ENCODE measurements at regions of chr3 and their contacts with region 1.

Region 1: DNA sequence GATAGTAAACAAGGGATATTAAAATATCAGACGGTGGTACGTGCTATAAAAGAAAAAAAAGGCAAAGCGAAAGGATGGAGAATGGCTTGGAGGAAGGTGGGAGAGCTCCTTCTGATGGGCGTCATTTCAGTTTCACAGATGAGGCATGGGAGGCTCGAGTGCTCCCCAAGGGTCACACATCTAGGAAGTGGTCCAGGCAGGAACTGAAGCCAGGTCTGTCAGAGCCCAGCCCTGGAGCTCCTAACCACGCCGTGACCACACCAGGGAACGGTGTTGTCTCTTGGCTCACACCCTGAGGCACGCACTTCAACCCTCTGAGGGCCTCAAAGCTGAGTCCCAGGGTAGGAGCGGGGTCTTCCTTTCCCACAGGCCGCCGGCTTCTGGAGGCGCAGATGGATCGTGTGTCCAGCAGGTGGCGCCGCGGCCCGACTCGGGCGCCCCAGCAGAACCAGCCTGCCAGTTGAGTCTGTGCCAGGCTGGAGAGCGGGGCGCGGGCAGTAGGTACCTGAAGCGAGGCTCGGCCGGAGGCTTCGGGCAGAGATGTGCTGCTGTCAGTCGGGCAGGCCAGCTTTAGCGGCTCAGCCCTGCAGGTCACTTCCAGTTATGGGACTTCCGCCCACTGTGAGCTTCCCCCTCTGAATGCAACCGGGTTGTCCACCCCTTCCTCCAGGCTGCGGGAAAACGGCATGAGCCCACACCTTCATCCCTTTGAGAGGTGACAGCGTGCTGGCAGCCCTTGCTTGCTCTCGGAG is 68.1 kb downstream of the SLC6A1 start:
- DNase-seq: peak; percentile 77
- ATAC-seq: peak; percentile 76
- H3K4me3 Mint-ChIP-seq: no peak overlapping the region
- H3K27ac Mint-ChIP-seq: no peak overlapping the region
- H3K4me1 Mint-ChIP-seq: no peaks in the 10 kb centered on the region
- H3K27me3 Mint-ChIP-seq: peaks cover 31% of the 10 kb centered on the region

Region 2: DNA sequence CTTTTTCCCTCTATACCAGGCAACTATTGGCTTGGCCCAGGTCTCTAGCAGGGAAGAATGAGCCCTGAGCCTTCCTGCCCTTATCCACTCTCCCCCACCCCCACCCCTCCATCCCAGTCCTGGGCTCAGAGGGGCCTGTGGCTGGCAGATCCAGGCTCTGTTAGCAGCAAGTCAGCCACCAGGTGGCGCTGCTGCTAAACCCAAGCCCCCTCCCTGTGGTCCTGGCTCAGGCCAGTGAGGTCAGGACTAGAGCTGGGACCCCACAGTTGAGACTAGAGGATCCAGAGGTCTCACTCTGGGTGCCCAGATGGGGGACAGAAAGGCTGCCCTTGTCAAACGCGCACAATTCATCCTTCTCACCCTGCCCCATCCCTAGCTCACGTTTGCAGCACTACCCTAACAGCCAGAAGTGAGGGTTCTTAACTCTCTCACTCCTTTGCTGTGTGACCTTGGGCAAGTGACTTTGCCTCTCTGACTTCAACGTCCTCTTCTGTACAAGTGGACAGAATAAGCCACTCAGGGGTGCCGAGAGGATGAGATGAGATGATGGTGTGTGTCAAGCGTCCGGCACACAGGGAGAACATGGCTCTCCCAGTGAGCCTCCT is 114.9 kb before region 1 on chr3:
- CTCF ChIA-PET with region 1: interaction called, 43 read pairs
- POLR2A ChIA-PET with region 1: no interaction called
- intact Hi-C with region 1: loop called (anchors 1 kb)
- DNase-seq: peak; percentile 79
- ATAC-seq: peak; percentile 83
- H3K4me3 Mint-ChIP-seq: no peak overlapping the region
- H3K27ac Mint-ChIP-seq: no peak overlapping the region
- H3K4me1 Mint-ChIP-seq: no peaks in the 10 kb centered on the region
- H3K27me3 Mint-ChIP-seq: peaks cover 5% of the 10 kb centered on the region

Region 3: DNA sequence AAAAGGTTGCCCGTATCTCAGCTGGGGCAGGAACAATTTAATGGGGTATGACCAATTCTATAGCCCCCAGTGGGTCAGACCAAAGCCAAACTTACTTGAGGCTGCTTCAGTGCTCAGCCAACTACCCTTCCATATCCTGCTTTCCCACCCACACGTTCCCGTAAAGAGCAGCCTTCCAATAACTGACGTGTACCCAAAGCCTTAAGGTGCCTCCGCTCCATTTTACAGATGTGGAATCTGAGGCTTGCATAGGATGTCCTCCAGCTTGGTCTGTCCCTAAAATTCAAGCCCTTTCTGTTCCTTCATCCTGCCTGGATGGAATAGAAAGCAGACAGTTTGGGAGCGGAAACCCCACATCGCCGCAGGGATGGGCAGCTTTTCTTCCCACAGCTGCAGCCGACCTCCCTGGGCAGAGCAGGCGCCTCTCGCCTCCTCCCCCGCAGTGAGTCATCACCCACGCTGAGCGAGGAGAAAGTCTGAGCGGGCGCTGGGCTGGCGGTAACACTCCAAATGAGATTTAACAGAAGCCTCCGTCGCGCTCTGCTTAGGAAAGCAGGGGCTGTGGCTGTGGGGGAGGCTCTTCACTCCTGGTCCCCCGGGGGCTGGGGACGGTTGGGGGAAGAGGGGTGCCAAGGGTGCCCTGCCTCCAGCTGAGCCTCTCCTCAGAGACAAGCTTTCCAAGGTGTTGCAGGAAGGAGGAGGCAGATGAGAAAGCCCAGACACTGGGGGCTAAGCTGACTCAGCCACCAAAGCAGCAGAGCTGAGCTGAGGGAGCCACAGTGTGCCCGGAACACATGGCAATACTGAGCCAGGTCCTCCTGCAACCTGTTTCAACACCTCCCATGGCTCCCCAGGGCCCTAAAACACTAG is 35.8 kb after region 1 on chr3:
- CTCF ChIA-PET with region 1: interaction called, 15 read pairs
- POLR2A ChIA-PET with region 1: no interaction called
- intact Hi-C with region 1: no loop called
- DNase-seq: peak; percentile 91
- ATAC-seq: peak; percentile 95
- H3K4me3 Mint-ChIP-seq: peak overlapping the region; percentile 61
- H3K27ac Mint-ChIP-seq: peak overlapping the region; percentile 60
- H3K4me1 Mint-ChIP-seq: peaks cover 18% of the 10 kb centered on the region
- H3K27me3 Mint-ChIP-seq: peaks cover 16% of the 10 kb centered on the region

Region 4: DNA sequence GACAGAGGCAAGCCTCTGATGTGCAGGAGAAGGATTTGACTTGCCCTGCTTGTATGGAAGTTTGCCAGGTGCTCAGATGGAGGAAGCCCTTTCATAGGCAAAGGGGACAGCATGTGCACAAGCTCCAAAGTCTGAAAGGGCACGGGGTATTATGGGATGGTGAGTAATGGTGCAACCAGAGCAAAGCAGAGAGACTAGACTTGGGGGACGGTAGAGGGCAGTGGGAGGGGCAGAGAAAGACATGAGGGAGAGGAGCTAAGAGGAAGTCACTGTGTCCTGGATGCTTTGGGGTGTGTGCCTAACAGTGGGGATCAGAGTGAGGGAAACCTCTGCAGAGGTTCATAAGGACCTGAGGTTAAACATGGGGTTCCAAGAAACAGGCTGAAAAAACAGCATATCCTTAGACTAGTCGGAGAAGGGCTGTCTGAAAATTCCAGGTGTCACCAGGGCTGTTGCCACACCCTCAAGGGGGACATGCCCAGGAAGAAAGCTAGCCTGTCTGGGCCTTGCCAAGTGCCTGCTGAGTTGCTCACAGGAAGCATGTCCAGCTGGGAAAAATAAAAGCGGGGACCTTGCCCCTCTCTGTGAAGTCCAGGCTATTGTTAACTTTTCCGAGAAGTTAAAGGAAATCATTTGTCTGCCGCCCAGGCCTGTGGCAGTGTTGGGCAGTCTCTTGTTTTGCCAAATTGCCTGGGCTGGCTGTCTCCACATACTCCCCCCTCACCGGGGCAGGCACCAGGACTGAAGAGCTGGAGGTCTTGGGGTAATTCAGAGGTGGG is 140.8 kb after region 1 on chr3:
- CTCF ChIA-PET with region 1: interaction called, 7 read pairs
- POLR2A ChIA-PET with region 1: no interaction called
- intact Hi-C with region 1: loop called in 1 of 2 experiments (anchors 1 kb)
- DNase-seq: no peak
- ATAC-seq: no peak
- H3K4me3 Mint-ChIP-seq: no peak overlapping the region
- H3K27ac Mint-ChIP-seq: no peak overlapping the region
- H3K4me1 Mint-ChIP-seq: peaks cover 5% of the 10 kb centered on the region
- H3K27me3 Mint-ChIP-seq: peaks cover 22% of the 10 kb centered on the region

Region 5: GRCh38 chr3:11651900-11652299 is 591.2 kb after region 1 on chr3:
- CTCF ChIA-PET with region 1: interaction called, 9 read pairs
- POLR2A ChIA-PET with region 1: no interaction called
- intact Hi-C with region 1: loop called in 1 of 2 experiments (anchors 1 kb)
- DNase-seq: no peak
- ATAC-seq: no peak
- H3K4me3 Mint-ChIP-seq: no peak overlapping the region
- H3K27ac Mint-ChIP-seq: no peak overlapping the region
- H3K4me1 Mint-ChIP-seq: peaks cover 8% of the 10 kb centered on the region
- H3K27me3 Mint-ChIP-seq: no peaks in the 10 kb centered on the region